ENCODE measurements at regions of chr10 and their contacts with region 1.

Region 1: DNA sequence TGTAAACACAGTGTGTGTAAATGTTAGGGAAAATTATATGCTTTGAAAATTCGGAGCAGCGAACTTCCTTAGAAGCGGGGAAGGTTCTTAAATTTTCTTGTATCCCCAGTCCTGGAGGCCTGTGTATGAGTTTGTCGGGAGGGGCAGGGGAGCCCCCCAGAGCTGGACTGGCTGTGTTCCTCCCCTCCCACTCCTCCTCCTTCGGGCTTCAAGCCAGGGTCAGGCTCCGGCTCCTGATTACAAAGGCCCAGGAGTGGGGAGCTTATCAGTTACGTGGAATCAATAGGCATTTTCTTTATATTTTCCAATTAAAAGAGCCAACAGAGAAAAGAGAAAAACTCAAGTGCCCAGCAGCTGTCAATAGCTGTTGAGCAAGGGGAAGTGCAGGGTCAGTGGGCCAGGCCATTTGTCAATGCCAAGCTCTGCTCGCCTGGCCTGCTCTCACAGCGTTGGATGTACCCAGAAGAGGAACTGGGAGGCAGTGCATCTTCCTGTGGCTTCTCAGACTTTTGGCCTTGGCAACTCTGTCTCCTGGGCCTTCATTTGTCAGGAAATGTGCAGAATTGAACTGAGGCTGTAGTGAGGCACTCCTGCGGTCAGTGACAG is 156.9 kb upstream of the PCBD1 start:
- DNase-seq: no peak
- ATAC-seq: no peak
- H3K4me3 ChIP-seq: no peak overlapping the region
- H3K27ac ChIP-seq: no peak overlapping the region
- H3K4me1 ChIP-seq: no peaks in the 10 kb centered on the region; the same call in 1 of the 2 replicates
- H3K27me3 ChIP-seq: 0 out of 2 replicates have a peak, but pooled peaks cover under 1% of the 10 kb centered on the region
- CTCF ChIP-seq: no peak

Region 2: DNA sequence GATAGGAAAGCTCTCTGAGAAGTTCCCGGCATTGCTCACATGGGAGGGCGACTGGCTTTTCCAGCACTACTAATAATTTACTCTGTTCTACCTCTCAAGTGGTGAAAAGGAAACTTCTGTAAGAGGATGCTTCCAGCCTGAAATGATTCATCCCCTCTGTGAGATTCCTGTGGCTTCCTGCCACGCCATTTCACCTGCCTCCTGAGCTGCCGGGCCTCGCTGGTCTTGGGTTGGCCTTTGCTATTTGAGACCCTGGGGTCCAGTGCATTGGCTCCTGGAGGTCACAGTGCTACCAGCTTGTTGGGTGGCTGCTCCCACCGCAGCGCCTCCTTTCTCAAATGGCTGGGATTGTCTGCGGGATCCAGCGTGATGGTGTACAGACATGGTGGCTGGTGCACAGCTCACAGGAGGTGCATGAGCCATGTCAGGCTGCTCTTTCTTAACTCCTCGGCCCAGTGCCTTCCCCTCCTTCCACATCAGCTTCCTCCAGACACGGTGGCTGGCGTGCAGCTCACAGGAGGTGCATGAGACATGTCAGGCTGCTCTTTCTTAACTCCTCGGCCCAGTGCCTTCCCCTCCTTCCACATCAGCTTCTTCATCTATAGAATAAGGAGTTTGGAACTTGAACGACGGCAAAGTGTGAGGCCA is 114.0 kb before region 1 on chr10:
- CTCF ChIA-PET with region 1: no interaction called
- POLR2A ChIA-PET with region 1: no interaction called
- intact Hi-C with region 1: loop called (anchors 10 kb)
- DNase-seq: peak; percentile 94
- ATAC-seq: peak; percentile 89
- H3K4me3 ChIP-seq: no peak overlapping the region
- H3K27ac ChIP-seq: peak overlapping the region; percentile 24
- H3K4me1 ChIP-seq: peaks cover 15% of the 10 kb centered on the region
- H3K27me3 ChIP-seq: no peaks in the 10 kb centered on the region
- CTCF ChIP-seq: no peak

Region 3: DNA sequence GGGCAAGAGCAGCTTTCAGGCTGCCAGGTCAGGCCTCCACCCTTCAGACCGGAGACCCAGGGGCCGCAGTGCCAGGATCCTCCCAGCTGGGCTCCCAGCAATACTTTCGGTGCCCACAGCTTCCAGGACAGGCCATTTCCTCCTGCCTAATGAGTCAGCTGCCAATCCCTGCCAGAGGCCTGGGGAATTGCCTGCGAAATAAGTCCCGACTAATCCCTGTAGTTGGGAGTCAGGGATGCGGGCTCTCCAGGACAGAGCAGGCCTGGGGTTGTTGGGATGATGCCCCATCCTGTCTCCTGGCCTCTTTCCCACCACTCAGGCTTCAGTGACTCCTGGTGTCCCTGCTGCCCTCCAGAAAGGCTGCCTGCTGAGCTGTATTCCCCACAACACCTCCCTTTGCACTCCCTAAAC is 23.6 kb after region 1 on chr10:
- CTCF ChIA-PET with region 1: no interaction called
- POLR2A ChIA-PET with region 1: no interaction called
- intact Hi-C with region 1: no loop called
- DNase-seq: peak; percentile 85
- ATAC-seq: peak; percentile 90
- H3K4me3 ChIP-seq: no peak overlapping the region
- H3K27ac ChIP-seq: peak overlapping the region; percentile 22; the same call in 1 of the 2 replicates
- H3K4me1 ChIP-seq: peaks cover 13% of the 10 kb centered on the region
- H3K27me3 ChIP-seq: no peaks in the 10 kb centered on the region
- CTCF ChIP-seq: no peak

Measured in PC-3 (cell line).